ENCODE measurements at regions of chrX and their contacts with region 1.

Region 1: DNA sequence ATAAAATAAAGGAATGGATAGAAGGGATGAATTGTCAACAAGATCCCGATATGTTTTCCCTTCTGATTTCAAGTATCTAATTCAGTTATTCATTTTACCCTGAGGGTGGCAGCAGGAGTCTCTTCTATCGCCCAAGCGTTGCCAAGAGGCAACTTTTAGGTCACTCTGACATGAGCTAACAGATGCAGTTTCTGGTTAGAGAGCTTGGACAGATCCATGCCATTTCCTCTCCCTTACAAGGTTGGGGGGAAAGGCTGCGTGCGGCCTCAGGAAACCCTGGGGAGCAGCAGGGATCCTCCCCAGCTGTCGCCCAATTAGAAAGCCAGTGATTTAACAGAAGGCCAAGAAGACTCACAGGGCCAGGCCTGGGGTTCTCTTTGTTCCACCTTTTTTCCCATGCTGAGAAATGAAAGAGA is 35.3 kb upstream of the WAS start:
- DNase-seq: peak; percentile 43
- H3K4me3 ChIP-seq: no peak overlapping the region
- H3K27ac ChIP-seq: no peak overlapping the region
- H3K4me1 ChIP-seq: no peaks in the 10 kb centered on the region
- H3K27me3 ChIP-seq: peaks cover 0 to 2% of the 10 kb centered on the region in 2 experiments
- CTCF ChIP-seq: peak in 1 of 2 donors; percentile 15
- POLR2A ChIP-seq: no peak

Region 2: GRCh38 chrX:48945516-48946348 is 297.4 kb after region 1 on chrX:
- CTCF ChIA-PET with region 1: interaction called, 9 read pairs
- POLR2A ChIA-PET with region 1: no interaction called
- dilution Hi-C with region 1: no loop called
- intact Hi-C with region 1: loop called (anchors 5 kb)
- DNase-seq: peak; percentile 32
- H3K4me3 ChIP-seq: no peak overlapping the region
- H3K27ac ChIP-seq: no peak overlapping the region
- H3K4me1 ChIP-seq: no peaks in the 10 kb centered on the region
- H3K27me3 ChIP-seq: no peaks in the 10 kb centered on the region
- CTCF ChIP-seq: peak; percentile 61 to 69
- POLR2A ChIP-seq: no peak

Measured in endothelial cell of umbilical vein (primary cell).